Gastrocnemius medialis (tissue), 4 donors: ENCODE measurements at regions of chr13 and their contacts with region 1.

Region 1: GRCh38 chr13:103883164-103883563 is 816.9 kb upstream of the SLC10A2 start:
- DNase-seq: peak; percentile 73 to 84
- ATAC-seq: peak; percentile 99
- H3K4me3 ChIP-seq: peak overlapping the region in 1 of 4 donors; percentile 21
- H3K27ac ChIP-seq: peak overlapping the region in 3 of 4 donors; percentile 1 to 47 (median 26)
- H3K4me1 ChIP-seq: no peaks in the 10 kb centered on the region
- H3K27me3 ChIP-seq: no peaks in the 10 kb centered on the region
- CTCF ChIP-seq: peak in 4 of 5 experiments; percentile 41 to 49 (median 44)
- POLR2A ChIP-seq: no peak

Region 2: GRCh38 chr13:103965506-103966243 is 82.5 kb after region 1 on chr13:
- in situ Hi-C with region 1: no loop called
- intact Hi-C with region 1: loop called (anchors 10 kb)
- DNase-seq: peak; percentile 15 to 19
- ATAC-seq: peak; percentile 70 to 80
- H3K4me3 ChIP-seq: peak overlapping the region in 1 of 4 donors; percentile 20
- H3K27ac ChIP-seq: peak overlapping the region; percentile 71 to 82 (median 74)
- H3K4me1 ChIP-seq: peaks cover 33 to 35% of the 10 kb centered on the region in 2 donors
- H3K27me3 ChIP-seq: no peaks in the 10 kb centered on the region
- CTCF ChIP-seq: no peak
- POLR2A ChIP-seq: no peak

Region 3: GRCh38 chr13:104011505-104012241 is 128.5 kb after region 1 on chr13:
- in situ Hi-C with region 1: no loop called
- intact Hi-C with region 1: loop called (anchors 5 kb)
- DNase-seq: peak; percentile 61 to 63
- ATAC-seq: peak; percentile 90 to 93
- H3K4me3 ChIP-seq: peak overlapping the region; percentile 35 to 48 (median 43)
- H3K27ac ChIP-seq: peak overlapping the region; percentile 54 to 69 (median 60)
- H3K4me1 ChIP-seq: peaks cover 0 to 6% of the 10 kb centered on the region in 2 donors
- H3K27me3 ChIP-seq: no peaks in the 10 kb centered on the region
- CTCF ChIP-seq: no peak
- POLR2A ChIP-seq: peak in 1 of 2 donors; percentile 27

Region 4: GRCh38 chr13:104571161-104571892 is 688.2 kb after region 1 on chr13:
- in situ Hi-C with region 1: no loop called
- intact Hi-C with region 1: loop called (anchors 5 kb)
- DNase-seq: peak; percentile 34 to 64
- ATAC-seq: peak; percentile 96
- H3K4me3 ChIP-seq: no peak overlapping the region
- H3K27ac ChIP-seq: peak overlapping the region in 2 of 4 donors; percentile 50 to 68
- H3K4me1 ChIP-seq: peaks cover 6 to 13% of the 10 kb centered on the region in 2 donors
- H3K27me3 ChIP-seq: no peaks in the 10 kb centered on the region
- CTCF ChIP-seq: peak in 4 of 5 experiments; percentile 36 to 55 (median 48)
- POLR2A ChIP-seq: no peak